Activated B cell treated with CpG ODN at 0.5 μM for 24 hours (primary cell): ENCODE measurements at regions of chr16 and their contacts with region 1.

Region 1: DNA sequence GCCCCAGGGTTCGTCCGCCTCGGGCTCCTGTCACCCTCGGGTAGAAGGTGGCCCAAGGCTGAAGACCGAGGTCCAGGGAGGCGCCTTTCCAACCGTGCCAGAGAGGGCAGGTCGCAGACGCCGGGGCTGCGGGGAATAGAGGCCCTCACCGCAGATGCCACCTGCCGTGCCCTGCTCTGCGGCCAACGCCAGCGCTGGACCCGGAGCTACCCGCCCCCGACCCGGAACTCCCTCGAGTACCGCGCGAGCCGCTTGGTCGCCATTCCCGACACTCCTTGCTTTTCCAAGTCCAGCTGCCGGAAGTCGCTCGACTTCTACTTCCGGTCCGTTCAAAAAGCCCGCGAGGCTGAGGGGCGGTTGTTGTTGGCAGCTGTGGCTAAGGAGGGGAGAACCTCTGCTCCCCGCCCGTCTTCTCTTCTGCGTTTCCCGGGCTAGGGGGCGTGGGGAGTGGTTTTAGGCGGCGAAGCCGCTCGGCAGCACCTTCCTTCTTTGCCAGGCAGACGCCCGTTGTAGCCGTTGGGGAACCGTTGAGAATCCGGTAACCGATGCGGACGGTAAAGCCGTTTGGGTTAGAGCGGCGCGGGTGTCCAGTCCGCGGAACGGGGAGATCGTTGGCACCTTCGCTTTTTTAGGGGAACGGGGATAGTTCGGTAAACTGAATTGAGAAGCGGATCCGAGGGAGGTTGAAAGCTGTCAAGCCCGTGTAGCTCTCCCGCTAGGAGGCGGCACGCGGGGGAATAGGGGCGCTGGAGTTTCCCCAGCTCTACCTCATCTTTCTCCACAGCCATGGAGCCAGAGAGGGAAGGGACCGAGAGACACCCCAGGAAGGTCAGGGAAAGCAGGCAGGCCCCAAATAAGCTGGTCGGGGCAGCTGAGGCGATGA is at the starts of genes ERI2 and REXO5:
- DNase-seq: peak; percentile 67
- ATAC-seq: peak; percentile 86
- H3K4me3 Mint-ChIP-seq: peak within 1 kb of the TSS; percentile 98
- H3K27ac Mint-ChIP-seq: peak within 1 kb of the TSS; percentile 77
- H3K4me1 Mint-ChIP-seq: peaks cover 15% of the 10 kb centered on the region
- H3K27me3 Mint-ChIP-seq: no peaks in the 10 kb centered on the region
- CTCF ChIP-seq: no peak
- total RNA-seq, gene ERI2: 4.3 and 4.5 TPM in 2 replicates
- total RNA-seq, gene REXO5: 0.44 and 0.83 TPM in 2 replicates

Region 2: DNA sequence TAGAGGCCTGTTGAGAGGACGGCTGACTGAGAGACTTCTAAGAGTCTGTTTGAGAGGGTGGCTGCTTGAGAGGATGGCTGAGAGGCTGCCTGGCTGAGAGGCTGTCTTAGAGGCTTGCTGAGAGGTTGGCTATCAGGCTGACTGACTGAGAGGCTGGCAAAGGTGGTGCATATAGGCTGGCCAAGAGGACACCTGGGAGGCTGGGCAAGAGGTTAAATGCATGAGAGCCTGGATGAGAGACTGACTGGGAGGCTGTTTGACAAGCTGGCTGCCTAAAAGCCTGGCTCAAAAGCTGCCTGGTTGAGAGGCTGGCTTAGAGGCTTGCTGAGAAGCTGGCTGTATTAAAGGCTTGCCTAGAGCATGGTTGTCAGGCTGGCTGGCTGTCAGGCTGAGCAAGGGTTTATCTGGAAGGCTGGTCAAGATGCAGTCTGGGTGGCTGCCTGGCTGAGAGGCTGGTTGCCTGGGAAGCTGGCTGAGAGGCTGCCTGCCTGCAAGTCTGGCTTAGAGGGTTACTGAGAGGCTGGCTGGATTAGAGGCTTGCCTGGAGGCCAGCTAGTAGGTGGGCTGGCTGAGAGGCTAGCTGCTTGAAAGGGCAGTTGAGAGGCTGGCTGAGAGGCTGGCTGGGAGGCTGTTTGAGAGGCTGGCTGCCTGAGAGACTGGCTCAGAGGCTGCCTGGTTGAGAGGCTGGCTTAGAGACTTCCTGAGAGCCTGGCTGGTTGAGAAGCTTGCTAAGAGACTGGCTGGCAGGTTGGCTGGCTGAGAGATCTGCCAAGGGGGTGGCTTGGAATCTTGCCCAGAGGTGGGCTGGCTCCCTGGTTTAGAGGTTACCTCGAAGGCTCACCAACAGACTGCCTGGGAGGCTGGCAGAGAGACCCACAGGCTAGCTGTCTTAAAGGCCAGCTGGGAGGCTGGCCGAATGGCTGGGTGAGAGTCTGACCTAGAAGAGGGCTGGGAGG is 191.9 kb before region 1 on chr16:
- CTCF ChIA-PET with region 1: no interaction called
- POLR2A ChIA-PET with region 1: interaction called, 10 read pairs
- intact Hi-C with region 1: no loop called
- DNase-seq: no peak
- ATAC-seq: no peak
- H3K4me3 Mint-ChIP-seq: no peak overlapping the region
- H3K27ac Mint-ChIP-seq: no peak overlapping the region
- H3K4me1 Mint-ChIP-seq: no peaks in the 10 kb centered on the region
- H3K27me3 Mint-ChIP-seq: peaks cover 30% of the 10 kb centered on the region
- CTCF ChIP-seq: no peak

Region 3: DNA sequence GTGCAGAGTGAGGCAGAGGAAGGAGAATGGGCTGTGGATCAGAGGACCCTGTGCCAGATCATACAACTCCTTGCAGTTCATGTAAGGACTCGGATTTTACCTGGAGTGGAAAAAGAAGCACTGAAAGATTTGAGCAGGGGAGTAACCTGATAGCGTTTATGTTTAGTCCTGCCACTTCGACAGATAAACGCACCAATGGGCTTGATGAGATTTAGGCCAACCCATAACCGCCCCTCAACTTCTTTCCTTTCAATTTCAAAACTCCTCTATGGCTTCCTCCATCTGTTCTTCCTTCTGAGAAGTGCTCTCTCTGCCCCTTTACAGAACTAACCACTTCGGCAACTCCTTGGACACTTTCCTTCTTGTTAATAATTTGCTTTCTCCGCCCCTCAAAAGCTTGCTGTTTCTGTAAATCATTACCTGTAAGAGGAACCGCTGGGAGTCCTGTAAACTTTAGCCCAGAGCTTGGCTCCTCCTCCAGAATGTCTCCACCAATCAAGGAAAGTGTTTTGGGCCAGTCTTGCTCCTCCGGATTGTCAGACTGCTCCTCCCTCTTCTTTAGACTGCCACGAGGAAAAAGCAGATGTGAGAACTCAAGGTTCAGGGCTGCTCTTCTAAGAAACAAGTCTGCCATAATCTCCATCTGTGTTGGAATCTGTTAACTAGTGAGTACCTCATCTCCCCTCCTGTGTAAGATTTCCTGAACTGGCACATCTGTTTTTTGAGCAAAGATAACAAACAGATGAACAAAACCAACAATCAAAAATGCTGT is 42.8 kb before region 1 on chr16 and contains the start of gene ACSM3:
- CTCF ChIA-PET with region 1: interaction called, 3 read pairs
- POLR2A ChIA-PET with region 1: no interaction called
- intact Hi-C with region 1: loop called (anchors 1 kb)
- DNase-seq: peak; percentile 26
- ATAC-seq: peak; percentile 100
- H3K4me3 Mint-ChIP-seq: peak within 1 kb of the TSS; percentile 90
- H3K27ac Mint-ChIP-seq: peak within 1 kb of the TSS; percentile 93
- H3K4me1 Mint-ChIP-seq: peaks cover 15% of the 10 kb centered on the region
- H3K27me3 Mint-ChIP-seq: no peaks in the 10 kb centered on the region
- CTCF ChIP-seq: no peak
- total RNA-seq, gene ACSM3: 12.8 and 13.6 TPM in 2 replicates

Region 4: GRCh38 chr16:20879175-20880040 is 73.0 kb after region 1 on chr16:
- CTCF ChIA-PET with region 1: interaction called, 3 read pairs
- POLR2A ChIA-PET with region 1: no interaction called
- intact Hi-C with region 1: loop called (anchors 5 kb)
- DNase-seq: no peak
- ATAC-seq: no peak
- H3K4me3 Mint-ChIP-seq: no peak overlapping the region
- H3K27ac Mint-ChIP-seq: no peak overlapping the region
- H3K4me1 Mint-ChIP-seq: peaks cover 38% of the 10 kb centered on the region
- H3K27me3 Mint-ChIP-seq: no peaks in the 10 kb centered on the region
- CTCF ChIP-seq: no peak

Region 5: GRCh38 chr16:20900299-20901067 is 94.1 kb after region 1 on chr16 and contains the starts of genes DCUN1D3 and LYRM1:
- CTCF ChIA-PET with region 1: no interaction called
- POLR2A ChIA-PET with region 1: interaction called, 4 read pairs
- intact Hi-C with region 1: loop called (anchors 2 kb)
- DNase-seq: peak; percentile 75
- ATAC-seq: peak; percentile 76
- H3K4me3 Mint-ChIP-seq: peak within 1 kb of the TSS; percentile 91
- H3K27ac Mint-ChIP-seq: peak within 1 kb of the TSS; percentile 95
- H3K4me1 Mint-ChIP-seq: peaks cover 61% of the 10 kb centered on the region
- H3K27me3 Mint-ChIP-seq: no peaks in the 10 kb centered on the region
- CTCF ChIP-seq: no peak
- total RNA-seq, gene DCUN1D3: 4.1 and 4.7 TPM in 2 replicates
- total RNA-seq, gene LYRM1: 20.7 and 22.4 TPM in 2 replicates